ENCODE measurements at regions of chr7 and their contacts with region 1.

Region 1: DNA sequence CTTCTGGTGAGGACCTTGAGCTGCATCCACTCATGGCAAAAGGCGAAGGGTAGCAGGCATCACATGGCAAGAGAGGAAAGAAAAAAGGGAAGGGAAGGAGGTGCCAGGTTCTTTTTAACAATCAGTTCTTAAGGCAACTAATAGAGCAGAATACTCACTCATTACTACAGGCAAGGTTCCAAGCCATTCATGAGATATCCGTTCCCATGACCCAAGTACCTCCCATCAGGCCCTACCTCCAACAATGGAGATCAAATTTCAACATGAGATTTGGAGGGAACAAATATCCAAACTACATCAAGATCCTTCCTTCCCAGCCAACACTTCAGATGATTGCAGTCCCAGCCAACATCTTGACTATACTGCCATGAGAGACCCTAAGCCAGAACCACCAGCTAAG is 38.9 kb upstream of the YAE1 start:
- DNase-seq: no peak

Region 2: GRCh38 chr7:38796626-38797501 is 730.4 kb before region 1 on chr7:
- intact Hi-C with region 1: loop called (anchors 5 kb)
- DNase-seq: peak in 41 of 42 donors; percentile 4 to 88 (median 65)